ENCODE measurements at regions of chr12 and their contacts with region 1.

Region 1: DNA sequence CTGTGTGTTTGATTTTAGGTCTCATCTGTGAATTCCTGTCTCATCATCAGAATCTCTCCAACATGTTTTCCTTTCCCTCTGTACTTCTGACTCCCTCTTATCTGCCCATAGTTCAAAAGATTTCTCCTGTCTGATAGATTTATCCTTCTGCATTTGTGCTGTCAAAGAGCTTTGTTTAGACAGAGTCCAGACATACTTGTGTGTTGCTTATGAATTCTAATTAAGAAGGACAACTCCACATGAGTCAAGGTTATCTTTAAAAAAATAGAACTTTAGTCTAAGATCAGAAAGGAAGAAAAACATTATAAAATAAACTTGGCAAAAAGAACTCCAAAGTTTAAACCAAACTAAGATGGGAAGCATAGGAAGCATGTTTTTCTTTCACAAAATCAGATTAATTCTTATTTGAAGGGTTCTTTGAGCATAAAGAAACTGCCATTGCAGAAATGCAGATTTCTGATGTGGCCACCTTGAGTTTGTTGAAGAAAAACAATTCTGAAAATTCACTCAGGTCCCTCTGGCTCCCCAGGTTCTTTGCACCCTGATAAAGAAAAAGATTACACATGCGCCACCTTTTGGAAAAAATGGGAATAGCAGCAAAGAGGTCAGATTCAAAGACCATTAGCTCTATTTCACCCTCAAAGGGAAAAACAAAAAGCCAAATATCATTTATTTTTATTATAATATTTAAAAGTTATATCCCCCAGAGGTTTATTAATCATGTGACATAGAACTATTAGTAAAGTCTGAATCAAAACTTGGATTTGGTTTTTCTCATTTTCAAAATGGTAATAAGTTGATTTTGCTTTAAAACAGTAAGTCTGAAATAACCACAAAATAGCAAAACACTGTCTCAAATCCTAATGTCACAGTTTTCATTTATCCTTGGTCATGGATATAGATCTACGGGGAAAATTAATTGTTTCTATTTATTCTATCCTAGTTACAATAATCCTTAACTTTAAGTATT is 143.7 kb upstream of the DCN start:
- DNase-seq: peak; percentile 26
- H3K4me3 ChIP-seq: peak overlapping the region in 1 of 2 experiments; percentile 45; a peak in 1 of 4 replicates
- H3K27ac ChIP-seq: peak overlapping the region; percentile 70 to 91; a peak in 3 of 4 replicates
- H3K4me1 ChIP-seq: no peaks in the 10 kb centered on the region; a peak in 1 of 4 replicates
- H3K27me3 ChIP-seq: no peaks in the 10 kb centered on the region
- CTCF ChIP-seq: peak; percentile 86
- EP300 ChIP-seq: peak; percentile 71 to 76; a peak in 3 of 4 replicates
- RAD21 ChIP-seq: peak; percentile 80

Region 2: GRCh38 chr12:90970473-90970872 is 355.9 kb before region 1 on chr12:
- CTCF ChIA-PET with region 1: interaction called, 12 read pairs
- POLR2A ChIA-PET with region 1: no interaction called
- DNase-seq: no peak
- H3K4me3 ChIP-seq: no peak overlapping the region
- H3K27ac ChIP-seq: no peak overlapping the region
- H3K4me1 ChIP-seq: peaks cover 0 to 13% of the 10 kb centered on the region in 2 experiments; a peak in 3 of 4 replicates
- H3K27me3 ChIP-seq: no peaks in the 10 kb centered on the region
- CTCF ChIP-seq: no peak
- EP300 ChIP-seq: no peak
- RAD21 ChIP-seq: no peak